Endothelial cell of umbilical vein (primary cell): ENCODE measurements at regions of chr22 and their contacts with region 1.

Region 1: DNA sequence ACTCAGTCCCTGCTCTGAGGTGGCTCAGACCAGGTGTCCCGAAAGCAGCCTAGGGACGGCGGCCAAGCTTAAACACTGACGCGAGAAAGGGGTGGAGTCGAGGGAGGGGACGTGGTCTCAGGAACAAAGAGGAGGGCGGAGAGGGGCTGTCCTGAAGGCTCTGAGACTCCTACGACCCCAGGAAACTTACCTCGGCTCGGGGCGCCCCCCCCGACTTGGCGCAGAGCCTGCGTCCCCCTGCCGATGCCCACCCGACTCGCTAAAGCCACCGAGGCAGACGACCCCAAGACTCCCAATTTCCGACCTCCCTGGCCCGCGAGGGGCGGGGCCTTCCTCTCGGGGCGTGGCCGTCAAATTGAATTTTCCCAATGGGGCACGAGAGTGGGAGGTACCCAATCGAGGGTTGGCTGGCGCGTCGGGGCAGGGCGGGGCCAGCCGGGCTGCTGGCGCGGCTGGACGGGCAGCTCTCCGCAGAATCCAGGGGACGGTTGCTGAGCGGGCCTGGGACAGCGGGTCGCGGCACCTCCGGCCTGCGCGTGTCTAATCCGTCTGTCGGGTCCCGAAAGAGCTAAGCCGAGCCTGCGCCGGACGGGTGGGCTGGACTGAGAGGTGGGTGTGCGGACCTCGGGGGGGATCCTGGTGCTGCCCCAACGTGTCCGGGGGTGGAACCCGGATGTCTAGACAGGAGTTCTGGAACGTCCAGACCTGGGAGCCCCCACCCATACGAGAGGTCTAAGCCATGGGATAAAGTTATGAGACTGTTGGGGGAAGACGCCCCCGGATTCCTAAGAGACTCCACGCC is at the start of gene SMTN:
- DNase-seq: peak; percentile 96
- H3K4me3 ChIP-seq: peak within 1 kb of the TSS; percentile 47 to 85 (median 65)
- H3K27ac ChIP-seq: peak within 1 kb of the TSS; percentile 96
- H3K4me1 ChIP-seq: peaks cover 33% of the 10 kb centered on the region
- H3K27me3 ChIP-seq: no peaks in the 10 kb centered on the region
- CTCF ChIP-seq: no peak
- POLR2A ChIP-seq: peak; percentile 97
- total RNA-seq, gene SMTN: 197 and 201 TPM in 2 replicates

Region 2: DNA sequence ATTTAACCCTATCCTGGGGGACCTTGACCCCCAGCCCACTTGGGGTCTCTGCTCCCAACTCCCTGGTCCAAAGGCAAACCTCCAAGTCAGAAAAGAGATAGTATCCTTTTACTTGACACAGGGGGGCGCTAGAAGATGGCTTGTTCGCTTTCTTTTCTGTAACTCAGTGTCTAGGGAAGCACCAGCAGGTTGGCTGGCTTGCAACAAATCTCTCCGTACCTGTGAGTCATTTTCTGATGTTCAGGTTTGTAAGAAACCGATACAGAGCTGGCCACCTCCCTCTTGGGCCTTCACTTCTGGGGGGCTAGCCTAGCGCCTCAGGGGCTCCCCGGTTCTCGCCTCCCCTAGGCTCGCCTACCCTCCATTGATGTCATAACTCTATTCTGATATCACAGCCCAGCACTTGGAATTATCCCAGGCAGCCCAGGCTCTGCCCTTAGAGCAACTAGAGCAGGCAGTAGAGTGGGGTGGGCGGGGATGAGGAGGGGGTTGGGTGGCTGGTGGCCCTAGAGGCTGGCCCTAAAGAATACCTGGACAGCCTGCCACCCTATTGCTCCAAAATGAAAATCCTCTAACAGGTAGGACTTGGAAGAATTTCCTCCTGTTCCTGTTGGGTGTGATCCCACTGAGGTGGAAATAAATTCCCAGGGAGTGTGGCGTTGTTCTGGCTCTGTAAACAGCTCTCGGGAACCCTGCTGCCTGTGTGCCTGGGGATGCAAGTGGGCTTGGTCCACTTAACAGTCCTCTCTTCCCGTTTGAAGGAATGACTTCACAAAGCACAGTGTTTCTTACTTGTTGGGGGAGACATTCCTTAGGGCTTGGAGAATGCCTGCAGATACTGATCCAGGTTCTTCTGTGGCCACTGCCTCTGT is 317.0 kb before region 1 on chr22:
- CTCF ChIA-PET with region 1: interaction called, 7 read pairs
- POLR2A ChIA-PET with region 1: interaction called, 3 read pairs
- dilution Hi-C with region 1: no loop called
- intact Hi-C with region 1: loop called (anchors 1 kb)
- DNase-seq: peak; percentile 77
- H3K4me3 ChIP-seq: no peak overlapping the region
- H3K27ac ChIP-seq: no peak overlapping the region
- H3K4me1 ChIP-seq: no peaks in the 10 kb centered on the region
- H3K27me3 ChIP-seq: no peaks in the 10 kb centered on the region
- CTCF ChIP-seq: peak; percentile 67 to 71
- POLR2A ChIP-seq: no peak

Region 3: DNA sequence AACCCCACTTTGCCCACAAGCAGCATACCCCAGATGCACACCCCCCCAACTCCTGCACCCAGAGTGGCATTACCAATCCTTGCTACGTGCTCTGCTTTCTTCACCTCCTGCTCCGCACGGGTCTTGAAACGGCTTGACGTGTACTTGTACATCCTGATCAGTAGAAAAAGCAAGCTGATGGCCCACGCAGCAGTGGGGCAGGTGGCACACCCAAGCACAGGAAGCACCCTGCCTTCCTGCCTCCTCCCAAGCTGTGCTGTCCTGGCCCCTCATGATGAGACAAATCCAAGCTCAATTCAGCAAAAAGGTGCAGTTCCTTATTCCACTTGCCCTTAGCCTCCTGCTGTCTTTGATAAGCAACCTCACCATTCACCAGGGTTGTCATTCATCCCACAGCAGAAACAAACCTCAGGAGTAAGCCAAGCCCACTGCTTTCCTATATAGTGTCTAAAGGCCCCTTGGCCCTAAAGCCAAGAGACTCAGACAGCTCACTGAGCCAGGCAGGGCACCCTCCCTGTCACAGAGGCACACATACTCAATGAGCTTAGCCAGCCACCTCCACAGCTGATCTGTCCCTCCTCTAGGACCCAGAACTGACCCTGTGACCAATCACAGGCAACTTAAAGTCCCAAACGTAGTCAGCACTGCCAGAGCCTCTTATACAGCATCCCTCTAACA is 140.2 kb before region 1 on chr22:
- CTCF ChIA-PET with region 1: interaction called, 150 read pairs
- POLR2A ChIA-PET with region 1: interaction called, 9 read pairs
- dilution Hi-C with region 1: no loop called
- intact Hi-C with region 1: no loop called
- DNase-seq: no peak
- H3K4me3 ChIP-seq: no peak overlapping the region
- H3K27ac ChIP-seq: no peak overlapping the region
- H3K4me1 ChIP-seq: no peaks in the 10 kb centered on the region
- H3K27me3 ChIP-seq: no peaks in the 10 kb centered on the region
- CTCF ChIP-seq: no peak
- POLR2A ChIP-seq: no peak

Region 4: DNA sequence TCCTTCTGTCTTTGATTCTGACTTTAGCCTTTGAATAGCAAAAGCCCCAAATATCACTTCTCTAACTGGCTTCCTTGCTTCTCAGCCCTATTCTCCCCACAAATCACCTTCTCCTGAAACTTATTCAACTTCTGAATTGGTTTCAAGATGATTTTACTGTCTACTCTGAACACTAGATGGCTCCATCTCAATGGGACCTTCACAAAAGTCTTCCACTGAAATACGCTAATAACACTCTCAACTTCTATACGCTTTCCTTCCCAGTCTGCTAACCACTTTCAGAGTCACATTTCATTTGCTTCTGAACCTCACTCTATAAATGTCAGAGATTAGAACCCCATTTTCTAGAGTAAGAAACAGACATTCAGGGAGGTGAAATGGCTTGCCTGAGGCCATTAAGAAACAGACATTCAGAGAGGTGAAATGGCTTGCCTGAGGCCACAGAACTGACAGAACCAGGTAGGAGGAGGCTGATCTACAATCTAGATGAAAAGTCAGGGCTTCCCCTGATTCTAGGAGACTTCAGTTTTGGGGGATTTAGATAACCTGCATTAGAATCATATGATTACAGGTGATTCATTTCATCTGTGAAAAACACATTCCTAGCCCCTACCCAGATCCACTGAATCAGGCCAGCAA is 133.1 kb before region 1 on chr22:
- CTCF ChIA-PET with region 1: interaction called, 150 read pairs
- POLR2A ChIA-PET with region 1: interaction called, 9 read pairs
- dilution Hi-C with region 1: no loop called
- intact Hi-C with region 1: loop called (anchors 1 kb)
- DNase-seq: peak; percentile 63
- H3K4me3 ChIP-seq: no peak overlapping the region
- H3K27ac ChIP-seq: no peak overlapping the region
- H3K4me1 ChIP-seq: no peaks in the 10 kb centered on the region
- H3K27me3 ChIP-seq: no peaks in the 10 kb centered on the region
- CTCF ChIP-seq: peak; percentile 16 to 40
- POLR2A ChIP-seq: no peak

Region 5: DNA sequence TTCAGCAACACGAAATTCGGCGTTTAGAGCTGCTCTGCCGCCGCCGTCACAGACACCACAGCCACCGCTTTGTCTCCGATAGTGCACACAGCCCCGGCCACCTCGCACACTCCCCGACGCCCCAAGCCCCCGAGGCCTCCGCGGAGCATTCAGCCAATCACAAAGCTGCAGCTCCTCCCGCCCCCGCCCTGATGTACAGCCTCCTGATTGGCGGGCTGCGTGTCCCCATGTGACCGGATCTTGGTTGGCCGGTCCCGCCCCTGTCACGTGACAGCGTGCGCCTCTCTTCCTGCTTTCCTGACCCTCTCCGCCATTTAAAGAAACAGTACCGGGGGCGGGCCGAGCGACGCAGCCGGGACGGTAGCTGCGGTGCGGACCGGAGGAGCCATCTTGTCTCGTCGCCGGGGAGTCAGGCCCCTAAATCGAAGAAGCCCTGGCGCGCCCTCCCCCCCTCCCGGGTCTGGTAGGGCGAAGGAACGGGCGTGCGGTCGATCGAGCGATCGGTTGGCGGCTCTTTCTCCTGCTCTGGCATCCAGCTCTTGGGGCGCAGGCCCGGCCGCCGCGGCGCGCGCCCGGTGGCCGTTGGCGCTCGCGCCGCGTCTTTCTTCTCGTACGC is 112.0 kb before region 1 on chr22 and contains the start of gene TUG1:
- CTCF ChIA-PET with region 1: interaction called, 130 read pairs
- POLR2A ChIA-PET with region 1: interaction called, 44 read pairs
- dilution Hi-C with region 1: no loop called
- intact Hi-C with region 1: loop called (anchors 1 kb)
- DNase-seq: peak; percentile 99
- H3K4me3 ChIP-seq: peak within 1 kb of the TSS; percentile 80 to 95 (median 88)
- H3K27ac ChIP-seq: peak within 1 kb of the TSS; percentile 83
- H3K4me1 ChIP-seq: peaks cover 23% of the 10 kb centered on the region
- H3K27me3 ChIP-seq: no peaks in the 10 kb centered on the region
- CTCF ChIP-seq: no peak
- POLR2A ChIP-seq: peak; percentile 58
- total RNA-seq, gene TUG1: 76.8 and 85.9 TPM in 2 replicates

Region 6: DNA sequence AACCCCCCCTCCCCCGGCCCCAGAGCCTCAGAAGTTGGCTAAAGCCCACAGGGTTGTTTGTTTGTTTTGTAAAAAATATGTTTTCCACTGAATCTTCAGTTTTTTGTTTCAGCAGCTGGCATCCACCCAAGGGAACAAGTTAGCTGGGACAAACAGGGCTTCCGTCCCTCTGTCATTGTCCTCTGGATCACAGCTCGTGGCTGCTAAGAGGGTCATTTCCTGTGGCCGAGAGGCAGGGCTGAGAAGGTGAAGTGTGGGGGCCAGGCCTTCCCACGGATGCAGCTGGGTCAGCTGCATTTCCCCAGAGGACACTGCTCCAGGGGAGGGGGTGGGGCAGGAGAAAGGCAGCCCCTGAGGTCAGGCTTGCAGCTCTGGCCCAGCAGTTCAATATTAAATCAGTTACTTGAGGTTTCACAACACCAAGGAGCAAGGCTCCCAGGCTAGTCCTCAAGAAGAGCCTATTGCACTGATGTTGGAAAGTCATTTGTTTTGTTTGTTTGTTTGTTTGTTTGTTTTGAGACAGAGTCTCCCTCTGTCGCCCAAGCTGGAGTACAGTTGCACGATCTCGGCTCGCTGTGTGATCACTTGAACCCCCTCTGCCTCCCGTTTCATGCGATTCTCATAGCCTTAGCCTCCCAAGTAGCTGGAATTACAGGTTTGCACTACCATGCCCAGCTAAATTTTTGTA is 34.4 kb before region 1 on chr22:
- CTCF ChIA-PET with region 1: interaction called, 16 read pairs
- POLR2A ChIA-PET with region 1: interaction called, 22 read pairs
- dilution Hi-C with region 1: no loop called
- intact Hi-C with region 1: loop called (anchors 1 kb)
- DNase-seq: peak; percentile 93
- H3K4me3 ChIP-seq: no peak overlapping the region
- H3K27ac ChIP-seq: peak overlapping the region; percentile 79
- H3K4me1 ChIP-seq: peaks cover 32% of the 10 kb centered on the region
- H3K27me3 ChIP-seq: no peaks in the 10 kb centered on the region
- CTCF ChIP-seq: no peak
- POLR2A ChIP-seq: no peak